Heart left ventricle (tissue), 16 donors: ENCODE measurements at regions of chr10 and their contacts with region 1.

Region 1: GRCh38 chr10:100518761-100519241 is 860 bp downstream of the SEC31B start:
- DNase-seq: peak in 4 of 5 donors; percentile 46 to 72 (median 52)
- ATAC-seq: peak; percentile 53 to 79 (median 69)
- H3K4me3 ChIP-seq: peak overlapping the region; percentile 52 to 82 (median 60)
- H3K27ac ChIP-seq: peak overlapping the region in 8 of 12 donors; percentile 36 to 75 (median 68)
- H3K4me1 ChIP-seq: peaks cover 0 to 18% (median 10%) of the 10 kb centered on the region in 12 donors
- H3K27me3 ChIP-seq: peaks cover 0 to 5% (median 0%) of the 10 kb centered on the region in 9 donors
- CTCF ChIP-seq: peak; percentile 51 to 76 (median 66)
- POLR2A ChIP-seq: no peak

Region 2: DNA sequence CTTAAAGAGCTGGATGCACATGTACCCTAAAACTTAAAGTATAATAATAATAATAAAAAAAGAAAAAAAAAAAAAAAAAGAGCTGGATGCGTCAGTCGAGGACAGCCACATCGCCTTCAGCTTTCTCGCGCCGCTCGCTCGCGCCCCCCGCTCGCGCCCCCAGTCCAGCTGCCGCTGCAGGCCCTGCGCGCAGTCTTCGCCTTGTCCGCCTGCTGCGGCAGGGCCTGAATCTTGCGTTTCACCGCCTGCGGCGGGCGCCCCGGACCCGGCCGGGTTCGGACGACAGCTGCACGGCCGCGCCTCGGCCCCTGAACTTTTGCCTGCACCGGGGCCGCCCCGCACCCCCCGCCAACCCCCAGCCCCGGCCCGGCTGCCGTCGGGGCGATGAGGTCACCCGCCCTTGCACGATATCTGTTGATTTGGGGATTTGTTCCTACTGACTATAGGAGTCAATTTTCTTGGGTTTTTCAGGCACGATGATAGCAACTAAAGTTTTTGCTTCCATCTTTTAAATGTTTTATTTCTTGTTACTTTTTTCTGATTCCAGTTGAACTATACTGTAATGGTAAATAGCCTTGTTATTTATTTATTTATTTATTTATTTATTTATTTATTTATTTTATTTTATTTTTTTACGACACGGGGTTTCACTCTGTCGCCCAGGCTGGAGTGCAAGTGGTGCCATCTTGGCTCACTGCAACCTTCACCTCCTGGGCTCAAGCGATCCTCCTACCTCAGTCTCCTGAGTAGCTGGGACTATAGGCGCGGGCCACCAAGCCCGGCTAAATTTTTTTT is 403.6 kb before region 1 on chr10:
- intact Hi-C with region 1: no loop called
- DNase-seq: no peak
- ATAC-seq: no peak
- H3K4me3 ChIP-seq: peak overlapping the region in 3 of 12 donors; percentile 2 to 17 (median 11)
- H3K27ac ChIP-seq: no peak overlapping the region
- H3K4me1 ChIP-seq: peaks cover 0 to 2% (median 0%) of the 10 kb centered on the region in 12 donors
- H3K27me3 ChIP-seq: peaks cover 2 to 27% (median 18%) of the 10 kb centered on the region in 9 donors
- CTCF ChIP-seq: no peak
- POLR2A ChIP-seq: no peak

Region 3: GRCh38 chr10:100303724-100304319 is 215.0 kb before region 1 on chr10:
- intact Hi-C with region 1: loop called in 1 of 10 experiments (anchors 10 kb)
- DNase-seq: no peak
- ATAC-seq: no peak
- H3K4me3 ChIP-seq: no peak overlapping the region
- H3K27ac ChIP-seq: no peak overlapping the region
- H3K4me1 ChIP-seq: no peaks in the 10 kb centered on the region
- H3K27me3 ChIP-seq: peaks cover 0 to 45% (median 11%) of the 10 kb centered on the region in 9 donors
- CTCF ChIP-seq: peak; percentile 24 to 63 (median 42)
- POLR2A ChIP-seq: no peak

Region 4: DNA sequence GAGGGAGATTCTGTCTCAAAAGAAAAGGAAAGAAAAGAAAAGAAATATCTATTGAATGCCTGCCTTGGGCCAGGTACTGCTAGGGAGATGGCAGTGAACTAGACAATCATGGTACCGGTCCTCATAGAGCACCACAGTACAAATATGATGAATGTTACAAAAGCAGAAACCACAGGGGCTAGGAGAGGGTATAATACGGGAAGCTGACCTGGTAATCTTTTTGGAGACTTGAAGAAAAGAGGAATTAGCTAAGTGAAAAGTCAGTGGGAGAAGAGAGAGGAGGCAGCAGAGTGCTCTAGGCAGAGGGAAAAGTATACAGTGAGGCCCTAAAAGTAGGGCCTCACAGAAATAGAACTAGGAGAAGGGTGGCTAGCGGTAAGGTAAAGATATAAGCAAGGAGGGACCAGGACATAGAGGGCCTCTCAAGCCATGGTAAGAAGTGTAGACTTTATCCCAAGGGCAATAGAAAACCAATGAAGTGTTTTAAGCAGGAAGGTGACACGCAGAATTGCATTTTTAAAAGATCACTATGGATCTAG is 98.8 kb before region 1 on chr10:
- intact Hi-C with region 1: no loop called
- DNase-seq: no peak
- ATAC-seq: no peak
- H3K4me3 ChIP-seq: no peak overlapping the region
- H3K27ac ChIP-seq: no peak overlapping the region
- H3K4me1 ChIP-seq: no peaks in the 10 kb centered on the region
- H3K27me3 ChIP-seq: peaks cover 0 to 3% (median 0%) of the 10 kb centered on the region in 9 donors
- CTCF ChIP-seq: no peak
- POLR2A ChIP-seq: no peak

Region 5: GRCh38 chr10:100433253-100434240 is 85.3 kb before region 1 on chr10:
- intact Hi-C with region 1: loop called in 6 of 10 experiments (anchors 2 to 10 kb)
- DNase-seq: peak; percentile 83 to 89 (median 88)
- ATAC-seq: peak; percentile 58 to 92 (median 91)
- H3K4me3 ChIP-seq: no peak overlapping the region
- H3K27ac ChIP-seq: no peak overlapping the region
- H3K4me1 ChIP-seq: no peaks in the 10 kb centered on the region
- H3K27me3 ChIP-seq: no peaks in the 10 kb centered on the region
- CTCF ChIP-seq: peak; percentile 95 to 100 (median 99)
- POLR2A ChIP-seq: no peak

Region 6: DNA sequence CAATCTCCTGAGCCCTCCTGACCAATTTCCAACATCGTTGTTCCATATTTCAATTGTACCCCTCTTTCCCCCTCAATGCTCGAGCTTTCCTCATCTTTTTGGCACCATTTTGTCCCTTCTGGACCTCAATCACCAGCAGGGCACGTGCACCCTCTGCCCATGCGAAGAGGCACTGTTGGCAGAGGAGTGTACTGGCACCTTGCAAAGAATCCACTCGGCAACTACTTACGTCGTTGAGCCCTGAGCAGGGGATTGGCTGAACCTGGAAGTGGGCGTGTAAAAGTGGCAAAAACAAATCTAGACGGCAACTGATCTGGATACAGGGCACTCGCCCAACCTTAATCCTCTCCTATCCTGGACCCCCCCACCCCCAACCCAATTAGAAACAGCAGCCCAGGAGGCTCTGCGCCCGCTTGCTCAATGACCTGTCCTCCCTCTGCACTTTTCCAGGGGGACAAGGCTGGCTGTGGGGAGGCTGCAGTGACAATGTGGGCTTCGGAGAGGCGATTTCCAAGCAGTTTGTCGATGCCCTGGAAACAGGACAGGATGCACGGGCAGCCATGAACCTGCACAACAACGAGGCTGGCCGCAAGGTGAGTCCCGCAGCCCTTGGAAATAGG is 37.2 kb before region 1 on chr10:
- intact Hi-C with region 1: loop called in 1 of 10 experiments (anchors 5 kb)
- DNase-seq: peak; percentile 74 to 84 (median 82)
- ATAC-seq: peak; percentile 97
- H3K4me3 ChIP-seq: peak overlapping the region in 11 of 12 donors; percentile 33 to 59 (median 48)
- H3K27ac ChIP-seq: no peak overlapping the region
- H3K4me1 ChIP-seq: peaks cover 0 to 18% (median 15%) of the 10 kb centered on the region in 12 donors
- H3K27me3 ChIP-seq: peaks cover 0 to 43% (median 18%) of the 10 kb centered on the region in 9 donors
- CTCF ChIP-seq: no peak
- POLR2A ChIP-seq: no peak

Region 7: DNA sequence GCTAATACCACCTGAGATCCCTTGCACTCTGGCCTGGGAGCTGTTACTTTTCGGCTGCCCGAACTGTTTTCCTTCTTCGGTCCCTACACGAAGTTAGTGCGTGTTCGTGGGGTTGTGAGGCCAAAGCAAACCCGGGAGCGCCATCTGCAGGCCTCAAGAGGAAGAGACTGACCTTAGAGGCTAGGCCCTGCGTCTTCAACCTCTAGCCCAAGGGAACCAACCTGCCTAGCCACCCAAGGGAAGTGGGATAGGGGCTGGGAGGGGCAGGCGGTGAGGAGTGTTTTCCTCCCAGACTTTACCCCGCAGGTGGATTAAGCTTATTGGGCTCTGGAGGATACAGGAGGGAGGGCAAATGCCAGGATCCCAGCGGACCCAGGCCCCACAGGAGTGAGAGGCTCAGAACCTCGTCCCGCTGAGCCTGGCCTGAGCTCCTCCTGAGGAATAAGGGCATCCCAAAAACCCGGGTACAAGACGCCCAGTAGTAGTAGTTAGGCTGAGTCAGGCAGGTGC is 224.9 kb after region 1 on chr10:
- intact Hi-C with region 1: no loop called
- DNase-seq: peak in 1 of 5 donors; percentile 31
- ATAC-seq: peak in 3 of 4 donors; percentile 57 to 69 (median 58)
- H3K4me3 ChIP-seq: no peak overlapping the region
- H3K27ac ChIP-seq: no peak overlapping the region
- H3K4me1 ChIP-seq: peaks cover 0 to 71% (median 35%) of the 10 kb centered on the region in 12 donors
- H3K27me3 ChIP-seq: peaks cover 77 to 100% (median 100%) of the 10 kb centered on the region in 9 donors
- CTCF ChIP-seq: peak; percentile 10 to 58 (median 50)
- POLR2A ChIP-seq: no peak